HepG2 (cell line): ENCODE measurements at regions of chr6 and their contacts with region 1.

Region 1: DNA sequence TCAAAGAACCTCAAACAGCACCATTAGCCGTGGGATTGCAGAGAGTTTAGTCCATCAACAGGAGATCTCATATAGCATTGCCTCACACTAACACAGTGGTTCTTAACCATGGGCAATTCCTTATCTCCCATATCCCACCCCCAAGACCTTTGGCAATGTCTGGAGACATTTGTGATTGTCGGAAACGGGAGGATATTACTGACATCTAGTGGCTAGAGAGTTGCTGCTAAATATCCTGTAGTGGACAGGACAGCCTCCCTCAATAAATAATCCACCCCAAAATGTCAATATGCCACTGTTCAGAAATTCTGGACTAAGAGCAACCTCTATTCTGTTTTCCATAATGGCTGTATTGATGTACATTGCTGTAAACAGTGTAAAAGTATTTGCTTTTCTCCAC is 210.1 kb upstream of the CCN2 start:
- DNase-seq: peak; percentile 45
- ATAC-seq: peak; percentile 86
- H3K4me3 ChIP-seq: no peak overlapping the region
- H3K27ac ChIP-seq: no peak overlapping the region
- H3K4me1 ChIP-seq: peaks cover 7% of the 10 kb centered on the region; the same call in 1 of the 2 replicates
- H3K27me3 ChIP-seq: no peaks in the 10 kb centered on the region
- CTCF ChIP-seq: peak; percentile 90
- EP300 ChIP-seq: no peak
- POLR2A ChIP-seq: no peak
- RAD21 ChIP-seq: peak; percentile 84

Region 2: GRCh38 chr6:130307752-130308361 is 1853.4 kb before region 1 on chr6:
- CTCF ChIA-PET with region 1: no interaction called
- POLR2A ChIA-PET with region 1: no interaction called
- in situ Hi-C with region 1: no loop called
- intact Hi-C with region 1: no loop called
- DNase-seq: peak; percentile 61
- ATAC-seq: peak; percentile 85
- H3K4me3 ChIP-seq: no peak overlapping the region
- H3K27ac ChIP-seq: no peak overlapping the region
- H3K4me1 ChIP-seq: peaks cover 7% of the 10 kb centered on the region
- H3K27me3 ChIP-seq: no peaks in the 10 kb centered on the region
- CTCF ChIP-seq: no peak
- EP300 ChIP-seq: no peak
- POLR2A ChIP-seq: no peak
- RAD21 ChIP-seq: no peak

Region 3: DNA sequence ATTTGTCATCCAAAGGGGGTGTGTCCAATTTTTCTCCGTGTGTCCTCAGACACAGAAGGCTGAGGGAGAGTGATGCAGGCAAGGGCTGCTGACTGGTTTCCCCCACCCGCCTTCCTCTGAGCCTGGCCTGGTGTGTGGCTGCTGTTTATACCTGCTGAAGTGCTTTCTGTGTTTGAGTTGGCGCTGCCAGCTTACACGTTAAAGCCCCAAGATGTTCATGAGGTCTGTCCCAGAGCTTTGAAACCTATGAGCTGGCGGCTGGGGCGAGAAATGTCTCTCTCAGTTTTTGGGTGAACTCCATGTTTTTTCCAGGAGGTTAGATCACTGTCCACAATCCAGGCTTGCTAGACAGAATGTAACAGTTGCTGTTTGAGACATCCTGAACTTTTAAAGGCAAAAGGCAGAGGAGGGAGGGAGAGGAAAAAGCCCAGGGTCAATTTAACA is 141.1 kb before region 1 on chr6:
- CTCF ChIA-PET with region 1: no interaction called
- POLR2A ChIA-PET with region 1: no interaction called
- in situ Hi-C with region 1: no loop called
- intact Hi-C with region 1: loop called (anchors 5 kb)
- DNase-seq: no peak
- ATAC-seq: no peak; the same call in 2 of the 3 replicates
- H3K4me3 ChIP-seq: no peak overlapping the region
- H3K27ac ChIP-seq: peak overlapping the region; percentile 25
- H3K4me1 ChIP-seq: peaks cover 44% of the 10 kb centered on the region
- H3K27me3 ChIP-seq: no peaks in the 10 kb centered on the region
- CTCF ChIP-seq: no peak
- EP300 ChIP-seq: no peak
- POLR2A ChIP-seq: no peak
- RAD21 ChIP-seq: no peak

Region 4: DNA sequence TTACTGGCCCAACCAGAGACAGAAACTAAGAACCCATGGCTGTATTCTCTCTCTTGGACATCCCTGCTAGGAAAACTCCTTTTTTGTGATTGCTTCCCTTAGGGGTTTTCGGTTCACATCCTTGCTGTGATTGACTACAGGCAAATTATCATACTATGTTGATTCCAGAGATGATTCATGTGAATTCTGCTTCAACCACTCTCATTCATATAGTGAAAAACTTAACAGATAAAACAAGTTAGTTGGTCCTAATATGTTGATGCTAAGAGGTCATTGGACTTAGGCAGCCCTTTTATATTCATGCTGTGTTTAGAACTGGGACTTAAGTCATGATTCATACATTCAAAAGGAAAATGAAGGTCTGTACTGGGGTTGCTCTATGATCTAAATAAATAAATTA is 133.3 kb before region 1 on chr6:
- CTCF ChIA-PET with region 1: no interaction called
- POLR2A ChIA-PET with region 1: no interaction called
- in situ Hi-C with region 1: no loop called
- intact Hi-C with region 1: loop called (anchors 1 kb)
- DNase-seq: no peak
- ATAC-seq: no peak
- H3K4me3 ChIP-seq: no peak overlapping the region
- H3K27ac ChIP-seq: no peak overlapping the region
- H3K4me1 ChIP-seq: peaks cover 17% of the 10 kb centered on the region
- H3K27me3 ChIP-seq: no peaks in the 10 kb centered on the region
- CTCF ChIP-seq: no peak
- EP300 ChIP-seq: no peak
- POLR2A ChIP-seq: no peak
- RAD21 ChIP-seq: no peak

Region 5: GRCh38 chr6:132100388-132100990 is 60.8 kb before region 1 on chr6:
- CTCF ChIA-PET with region 1: no interaction called
- POLR2A ChIA-PET with region 1: no interaction called
- in situ Hi-C with region 1: no loop called
- intact Hi-C with region 1: loop called (anchors 5 kb)
- DNase-seq: no peak
- ATAC-seq: no peak
- H3K4me3 ChIP-seq: no peak overlapping the region
- H3K27ac ChIP-seq: no peak overlapping the region
- H3K4me1 ChIP-seq: no peaks in the 10 kb centered on the region
- H3K27me3 ChIP-seq: 0 out of 5 replicates have a peak, but pooled peaks cover 0 to 2% of the 10 kb centered on the region in 2 experiments
- CTCF ChIP-seq: no peak
- EP300 ChIP-seq: no peak
- POLR2A ChIP-seq: no peak
- RAD21 ChIP-seq: no peak

Region 6: DNA sequence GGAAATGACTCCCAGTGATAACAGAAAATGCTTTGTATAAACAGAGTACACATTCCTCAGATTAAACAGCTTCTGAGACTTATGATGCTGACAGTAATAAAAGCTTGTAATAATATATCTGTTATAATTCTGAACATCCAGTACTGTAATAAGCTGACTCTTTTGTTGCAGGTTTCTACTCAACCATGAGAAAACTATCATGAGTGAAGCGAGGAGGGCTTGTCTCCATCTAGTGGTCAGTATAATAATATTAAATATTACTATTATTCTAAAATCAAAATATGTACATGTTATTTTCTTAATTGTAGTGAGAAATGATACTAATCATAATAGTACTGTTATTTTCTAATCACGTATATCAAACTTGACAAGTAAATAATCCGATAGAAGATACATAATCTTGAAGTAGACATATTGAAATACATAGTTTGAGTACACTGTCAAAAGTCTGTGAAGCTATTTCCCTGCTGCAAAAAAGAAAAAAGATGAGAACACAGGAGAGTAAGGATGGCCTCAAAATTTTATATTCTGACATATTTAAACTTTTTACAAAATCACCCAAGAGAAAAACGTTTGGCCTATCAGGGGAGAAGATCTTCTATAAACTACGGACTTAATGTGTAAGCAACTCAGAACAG is 56.9 kb after region 1 on chr6:
- CTCF ChIA-PET with region 1: interaction called, 5 read pairs
- POLR2A ChIA-PET with region 1: no interaction called
- in situ Hi-C with region 1: no loop called
- intact Hi-C with region 1: loop called (anchors 5 kb)
- DNase-seq: peak; percentile 25
- ATAC-seq: no peak
- H3K4me3 ChIP-seq: no peak overlapping the region
- H3K27ac ChIP-seq: no peak overlapping the region
- H3K4me1 ChIP-seq: no peaks in the 10 kb centered on the region
- H3K27me3 ChIP-seq: peaks cover 0 to 6% of the 10 kb centered on the region in 2 experiments; a peak in 2 of 5 replicates
- CTCF ChIP-seq: peak; percentile 44
- EP300 ChIP-seq: no peak
- POLR2A ChIP-seq: no peak
- RAD21 ChIP-seq: peak; percentile 55